Mammary epithelial cell (primary cell): ENCODE measurements at regions of chr10 and their contacts with region 1.

Region 1: GRCh38 chr10:97686962-97687784 is at the start of gene AVPI1:
- DNase-seq: peak; percentile 99
- H3K4me3 ChIP-seq: peak within 1 kb of the TSS; percentile 88 to 95 (median 89)
- H3K27ac ChIP-seq: peak within 1 kb of the TSS; percentile 100
- H3K4me1 ChIP-seq: peaks cover 56% of the 10 kb centered on the region
- H3K27me3 ChIP-seq: no peaks in the 10 kb centered on the region
- CTCF ChIP-seq: no peak
- total RNA-seq, gene AVPI1: 31.4 to 33.8 TPM

Region 2: GRCh38 chr10:97584798-97585437 is 102.3 kb before region 1 on chr10:
- CTCF ChIA-PET with region 1: no interaction called
- dilution Hi-C with region 1: no loop called
- in situ Hi-C with region 1: no loop called
- intact Hi-C with region 1: no loop called
- DNase-seq: no peak
- H3K4me3 ChIP-seq: no peak overlapping the region
- H3K27ac ChIP-seq: no peak overlapping the region
- H3K4me1 ChIP-seq: peaks cover 7% of the 10 kb centered on the region
- H3K27me3 ChIP-seq: no peaks in the 10 kb centered on the region
- CTCF ChIP-seq: no peak

Region 3: DNA sequence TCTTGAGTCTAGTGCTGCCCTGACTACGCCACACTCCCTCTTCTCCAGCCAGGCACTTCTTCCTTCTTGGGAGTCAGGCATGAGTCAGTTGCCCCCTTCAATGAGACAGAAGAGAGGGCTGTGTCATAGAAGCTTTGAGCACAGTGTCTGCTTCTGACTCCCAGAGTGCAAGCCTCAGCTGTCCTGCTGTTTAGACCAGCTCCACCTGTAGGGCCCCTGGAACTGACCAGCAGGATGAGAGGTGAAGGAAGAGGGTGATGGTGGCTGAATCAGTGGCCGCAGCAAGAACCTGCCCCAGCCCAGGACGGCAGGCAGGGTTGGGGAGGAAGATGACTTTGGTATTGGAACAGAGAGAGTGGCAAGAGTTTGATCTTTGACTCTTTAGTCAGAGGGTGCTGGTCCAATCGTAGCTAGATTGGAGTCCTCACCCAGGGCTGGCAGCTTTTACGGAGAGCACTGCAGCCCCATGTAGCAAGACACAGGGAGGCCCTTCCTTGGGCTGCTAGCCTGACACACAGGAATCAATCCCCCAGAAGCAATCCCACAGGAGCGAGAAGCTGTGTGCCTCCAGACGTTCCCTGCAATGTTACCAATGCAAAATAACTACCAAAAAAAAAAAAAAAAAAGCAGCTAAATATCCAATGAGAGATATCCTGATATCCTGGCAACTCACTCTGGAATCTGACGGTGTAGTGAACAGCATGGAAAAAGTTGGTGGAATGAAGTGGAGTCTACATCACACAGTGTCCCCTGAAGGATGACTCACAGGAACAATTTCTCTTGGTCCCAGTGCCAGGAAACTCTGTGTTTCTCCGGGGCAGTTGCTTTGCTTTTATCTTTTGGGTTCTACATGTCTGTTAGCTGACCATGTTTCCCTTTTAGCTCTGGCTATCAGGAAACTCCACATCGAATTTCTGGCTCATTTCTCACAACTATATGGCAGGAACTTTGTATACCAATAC is 90.8 kb before region 1 on chr10:
- CTCF ChIA-PET with region 1: no interaction called
- dilution Hi-C with region 1: loop called (anchors 5 kb)
- in situ Hi-C with region 1: no loop called
- intact Hi-C with region 1: no loop called
- DNase-seq: peak; percentile 78
- H3K4me3 ChIP-seq: no peak overlapping the region
- H3K27ac ChIP-seq: no peak overlapping the region
- H3K4me1 ChIP-seq: peaks cover 25% of the 10 kb centered on the region
- H3K27me3 ChIP-seq: no peaks in the 10 kb centered on the region
- CTCF ChIP-seq: no peak

Region 4: GRCh38 chr10:97676770-97677581 is 10.2 kb before region 1 on chr10:
- CTCF ChIA-PET with region 1: interaction called, 3 read pairs
- dilution Hi-C with region 1: no loop called
- in situ Hi-C with region 1: no loop called
- intact Hi-C with region 1: loop called (anchors 1 kb)
- DNase-seq: peak; percentile 52
- H3K4me3 ChIP-seq: no peak overlapping the region
- H3K27ac ChIP-seq: no peak overlapping the region
- H3K4me1 ChIP-seq: peaks cover 4% of the 10 kb centered on the region
- H3K27me3 ChIP-seq: no peaks in the 10 kb centered on the region
- CTCF ChIP-seq: peak; percentile 87 to 88

Region 5: GRCh38 chr10:97714048-97714371 is 26.8 kb after region 1 on chr10:
- CTCF ChIA-PET with region 1: interaction called, 11 read pairs
- dilution Hi-C with region 1: no loop called
- in situ Hi-C with region 1: no loop called
- intact Hi-C with region 1: loop called (anchors 1 kb)
- DNase-seq: peak; percentile 81
- H3K4me3 ChIP-seq: peak overlapping the region; percentile 46 to 80 (median 72)
- H3K27ac ChIP-seq: peak overlapping the region; percentile 80
- H3K4me1 ChIP-seq: peaks cover 44% of the 10 kb centered on the region
- H3K27me3 ChIP-seq: no peaks in the 10 kb centered on the region
- CTCF ChIP-seq: peak in 1 of 2 donors; percentile 42